Left cardiac atrium (tissue), 4 donors: ENCODE measurements at regions of chr7 and their contacts with region 1.

Region 1: DNA sequence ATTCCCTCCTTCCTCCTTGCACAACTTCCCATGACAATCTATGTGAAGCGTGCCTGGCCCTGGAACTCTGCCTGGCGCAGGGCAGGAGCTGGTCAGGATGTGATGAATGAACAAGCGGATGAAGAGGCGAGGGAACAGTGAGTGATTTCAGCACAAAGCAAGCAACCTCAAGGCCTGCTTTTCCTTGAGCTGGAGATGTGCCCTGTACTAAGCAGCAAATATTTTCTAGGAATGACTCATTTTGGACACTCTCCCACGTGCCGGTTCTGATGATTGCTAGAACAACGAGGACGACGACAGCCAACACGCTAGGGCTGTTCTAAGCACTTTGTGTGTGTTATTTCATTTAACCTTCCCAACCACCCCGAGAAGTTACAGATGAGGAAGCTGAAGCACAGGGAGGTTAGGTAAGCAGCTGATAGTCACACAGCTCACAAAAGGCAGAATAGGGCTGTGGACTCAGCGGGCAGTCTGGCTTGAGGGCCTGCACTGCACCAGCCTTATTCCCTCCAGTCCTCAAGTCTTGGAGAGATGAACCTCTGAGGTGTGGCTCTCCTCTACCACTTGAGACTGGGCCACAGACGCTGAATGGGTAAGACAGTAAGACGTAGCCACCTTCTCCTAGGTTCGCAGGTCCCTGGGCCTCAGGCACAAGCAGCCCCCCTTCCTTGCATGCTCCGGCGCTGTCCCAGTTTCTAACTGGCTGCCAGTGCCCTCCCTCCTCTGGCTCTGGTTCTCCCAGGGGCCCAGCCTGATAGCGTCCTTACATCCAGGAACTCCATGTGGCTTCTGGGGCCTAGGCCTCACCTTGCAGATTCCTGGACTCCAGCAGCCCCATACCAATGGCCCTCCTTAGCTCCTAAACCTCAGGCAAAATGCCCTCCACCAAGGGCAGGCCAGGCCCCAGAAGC is 59.0 kb downstream of the YKT6 start:
- DNase-seq: peak; percentile 76
- ATAC-seq: peak; percentile 28 to 46

Region 2: DNA sequence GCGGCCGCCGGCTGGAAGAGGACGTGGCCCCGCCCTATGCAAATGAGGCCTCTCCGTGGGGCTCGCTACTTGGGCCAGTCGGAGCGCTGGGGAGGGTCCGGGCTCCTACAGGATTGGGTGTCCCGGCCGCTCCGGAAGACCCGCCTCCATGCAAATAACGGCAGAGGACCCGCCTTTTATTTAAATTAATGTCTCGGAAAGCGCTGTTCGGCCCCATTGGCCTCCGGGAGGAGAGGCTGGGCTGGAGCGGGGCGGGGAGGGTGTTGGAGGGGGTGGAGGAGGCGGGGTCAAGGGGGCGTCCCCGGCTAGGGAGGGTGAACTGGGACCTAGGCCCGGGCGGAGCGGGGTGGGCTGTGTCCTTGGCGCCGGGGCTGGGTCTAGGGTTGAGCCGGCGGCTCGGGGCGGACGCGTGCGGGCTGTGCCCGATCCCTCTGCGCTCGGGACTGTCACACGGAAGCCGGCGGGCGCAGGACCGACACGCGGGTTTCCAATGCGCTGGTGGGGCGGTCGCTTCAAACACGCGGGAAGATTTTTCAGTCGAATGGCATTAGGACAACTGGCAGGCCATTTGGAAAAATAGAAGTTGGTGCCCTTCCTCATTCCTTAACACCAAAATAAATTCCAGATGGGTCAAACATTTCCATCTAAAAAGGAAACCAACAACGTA is 177.1 kb before region 1 on chr7:
- intact Hi-C with region 1: no loop called
- DNase-seq: peak; percentile 100
- ATAC-seq: peak; percentile 94 to 97

Region 3: DNA sequence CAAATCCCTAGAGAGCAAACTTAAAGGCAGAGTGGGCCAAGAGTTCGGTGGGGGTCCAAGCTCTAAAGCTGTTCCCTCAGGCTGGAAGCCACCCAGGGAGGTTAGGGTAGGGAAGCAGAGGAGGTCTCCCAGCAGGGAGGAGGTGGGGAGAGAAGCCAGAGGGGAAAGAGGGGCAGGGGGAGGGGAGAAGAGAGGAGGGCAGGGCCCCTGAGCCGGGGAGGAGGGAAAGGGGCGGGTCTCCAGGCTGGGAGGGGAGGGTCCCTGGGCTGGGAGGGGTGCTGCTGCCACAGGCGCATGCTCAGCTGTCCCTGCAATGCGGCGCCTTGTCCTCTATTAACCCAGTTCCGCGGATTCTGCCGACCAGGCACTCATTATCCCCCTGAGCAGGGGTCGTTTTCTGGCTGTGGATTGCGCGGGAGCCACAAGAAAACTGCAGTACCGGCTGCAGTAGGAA is 16.2 kb after region 1 on chr7:
- intact Hi-C with region 1: no loop called
- DNase-seq: peak; percentile 22
- ATAC-seq: no peak

Region 4: GRCh38 chr7:44307301-44307900 is 47.6 kb after region 1 on chr7:
- intact Hi-C with region 1: loop called in 1 of 2 experiments (anchors 5 kb)
- DNase-seq: peak; percentile 49
- ATAC-seq: peak; percentile 60 to 62